ENCODE measurements at regions of chr6 and their contacts with region 1.

Region 1: DNA sequence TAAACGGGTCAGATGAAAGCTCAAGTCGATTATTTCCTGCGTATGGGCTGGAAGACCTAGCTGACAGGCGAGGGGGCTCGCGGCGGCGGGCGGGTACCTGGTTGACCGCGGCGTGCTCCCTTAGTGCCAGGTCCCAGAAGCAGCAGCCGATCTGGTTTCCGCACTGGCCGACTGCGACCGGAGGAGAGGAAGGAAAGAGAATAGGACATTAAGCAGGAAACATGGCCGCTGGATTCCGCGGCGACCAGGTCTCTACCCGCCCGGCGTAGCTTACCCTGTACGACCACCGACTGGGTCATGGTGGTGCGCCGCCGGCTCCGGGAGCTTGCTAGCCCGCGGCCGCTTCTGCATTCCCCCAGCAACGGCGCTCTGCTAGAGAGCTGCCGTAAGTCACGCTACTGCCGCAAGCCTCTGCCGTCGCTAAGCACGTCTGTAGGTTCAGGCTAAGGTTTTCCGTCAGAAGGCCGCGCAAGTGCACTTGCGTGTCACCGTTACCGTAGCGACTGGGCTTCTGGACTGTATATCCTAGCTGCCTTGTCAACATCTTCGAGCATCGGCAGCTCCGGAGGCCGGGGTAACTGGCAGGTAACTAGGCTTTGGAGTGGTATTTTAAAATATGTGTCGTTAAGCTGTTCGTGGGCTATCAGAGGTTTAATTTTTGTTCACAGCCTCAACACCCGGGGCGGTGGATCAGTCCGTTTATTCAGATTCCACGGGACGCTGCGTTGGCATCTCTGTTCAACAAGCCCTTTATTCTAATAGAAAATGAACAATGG is at the starts of genes FAM229B and TUBE1:
- H3K4me3 Mint-ChIP-seq: no peak within 1 kb of the TSS
- H3K27ac Mint-ChIP-seq: no peak within 1 kb of the TSS
- H3K4me1 Mint-ChIP-seq: peaks cover 17% of the 10 kb centered on the region
- H3K27me3 Mint-ChIP-seq: peaks cover 8% of the 10 kb centered on the region

Region 2: GRCh38 chr6:112061605-112062004 is 25.7 kb before region 1 on chr6:
- intact Hi-C with region 1: no loop called
- H3K4me3 Mint-ChIP-seq: no peak overlapping the region
- H3K27ac Mint-ChIP-seq: no peak overlapping the region
- H3K4me1 Mint-ChIP-seq: no peaks in the 10 kb centered on the region
- H3K27me3 Mint-ChIP-seq: peaks cover 4% of the 10 kb centered on the region

Region 3: DNA sequence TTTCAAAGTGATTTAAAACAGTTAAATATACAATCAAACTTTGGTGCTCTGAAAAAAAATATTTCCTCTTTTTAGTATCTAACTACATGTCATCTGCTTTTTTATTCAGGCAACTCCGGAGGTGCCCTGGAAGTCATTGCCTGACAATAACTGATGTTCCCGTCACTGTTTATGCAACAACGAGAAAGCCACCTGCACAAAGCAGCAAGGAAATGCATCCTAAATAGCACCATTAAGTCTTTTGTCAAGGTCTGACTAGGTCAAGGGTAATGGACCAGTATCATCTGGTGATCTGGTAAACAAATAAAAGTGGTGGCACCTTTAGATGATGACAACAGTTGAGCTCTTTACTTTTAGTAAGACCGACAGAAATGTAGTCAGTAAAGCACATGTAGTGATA is 13.2 kb after region 1 on chr6:
- intact Hi-C with region 1: no loop called
- H3K4me3 Mint-ChIP-seq: no peak overlapping the region
- H3K27ac Mint-ChIP-seq: no peak overlapping the region
- H3K4me1 Mint-ChIP-seq: no peaks in the 10 kb centered on the region
- H3K27me3 Mint-ChIP-seq: peaks cover 14% of the 10 kb centered on the region

Region 4: DNA sequence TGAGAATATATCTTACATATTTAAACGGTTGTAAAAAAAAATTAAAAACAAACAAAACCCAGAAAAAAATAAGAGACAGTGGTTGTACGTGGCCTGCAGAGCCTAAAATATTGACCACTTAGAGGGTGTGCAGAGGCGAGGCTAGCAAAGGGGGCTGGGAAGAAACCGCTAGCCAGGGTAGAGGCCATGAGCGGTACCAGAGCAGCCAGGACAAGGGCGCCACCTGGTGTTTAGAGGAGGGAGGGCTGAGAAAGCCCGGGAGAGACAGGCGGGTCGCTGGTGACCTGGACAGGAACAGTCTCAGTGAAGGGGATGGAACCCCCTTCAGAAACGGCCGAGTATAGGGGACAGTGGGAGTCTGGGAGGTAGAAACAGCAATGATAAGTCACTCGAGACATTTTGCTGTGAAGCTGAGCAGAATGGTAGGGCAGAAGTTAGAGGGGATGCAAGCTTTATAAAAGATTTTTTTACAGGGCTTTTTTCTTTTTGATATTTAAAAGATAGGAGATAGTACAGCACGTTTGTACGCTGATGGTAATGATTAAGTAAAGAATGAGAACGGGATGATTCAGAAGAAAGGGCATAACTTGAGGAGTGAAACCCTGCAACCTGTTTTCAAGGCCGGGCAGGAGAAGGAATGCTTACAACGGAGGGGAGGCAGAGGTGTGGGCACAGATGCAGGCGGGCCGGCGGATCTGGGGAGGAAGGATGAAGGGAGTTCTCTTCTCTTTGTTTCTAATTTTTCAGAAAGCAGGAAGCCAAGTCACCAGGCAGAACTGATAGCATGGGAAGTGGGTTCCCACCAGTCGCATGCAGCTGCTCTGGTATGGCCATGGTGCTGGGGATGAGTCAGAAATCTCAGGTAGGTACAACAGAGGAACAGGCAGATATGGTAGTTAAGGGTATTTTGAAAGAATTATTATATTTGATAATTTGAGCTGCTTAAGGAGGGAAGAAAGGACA is 76.3 kb after region 1 on chr6:
- intact Hi-C with region 1: loop called (anchors 1 kb)
- H3K4me3 Mint-ChIP-seq: no peak overlapping the region
- H3K27ac Mint-ChIP-seq: no peak overlapping the region
- H3K4me1 Mint-ChIP-seq: peaks cover 6% of the 10 kb centered on the region
- H3K27me3 Mint-ChIP-seq: peaks cover 27% of the 10 kb centered on the region

Region 5: DNA sequence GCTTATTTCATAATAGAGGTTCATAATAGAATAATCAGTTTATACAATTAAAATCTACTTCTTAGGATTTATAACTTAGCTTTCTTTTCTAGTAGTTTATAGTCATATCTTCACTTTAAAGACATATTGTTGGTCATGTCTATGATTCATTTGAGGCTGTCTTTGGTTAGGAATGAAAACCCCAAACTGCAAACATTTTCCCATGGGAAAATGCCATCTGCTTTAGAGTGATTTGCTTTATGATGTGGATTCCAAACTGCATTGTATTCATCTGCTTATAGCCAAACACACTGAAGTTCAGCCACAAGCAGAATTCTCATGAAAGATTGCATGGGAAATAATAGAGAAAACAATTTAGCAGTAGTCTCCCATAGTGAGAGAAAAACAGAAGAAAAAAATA is 387.8 kb after region 1 on chr6:
- intact Hi-C with region 1: no loop called
- H3K4me3 Mint-ChIP-seq: no peak overlapping the region
- H3K27ac Mint-ChIP-seq: no peak overlapping the region
- H3K4me1 Mint-ChIP-seq: no peaks in the 10 kb centered on the region
- H3K27me3 Mint-ChIP-seq: no peaks in the 10 kb centered on the region